ENCODE measurements at regions of chr1 and their contacts with region 1.

Region 1: GRCh38 chr1:151539990-151540981 is at the start of gene TUFT1:
- DNase-seq: peak; percentile 97
- H3K4me3 Mint-ChIP-seq: peak within 1 kb of the TSS; percentile 96
- H3K27ac Mint-ChIP-seq: peak within 1 kb of the TSS; percentile 98
- H3K4me1 Mint-ChIP-seq: peaks cover 62% of the 10 kb centered on the region
- H3K27me3 Mint-ChIP-seq: no peaks in the 10 kb centered on the region
- CTCF ChIP-seq: no peak
- total RNA-seq, gene TUFT1: 90.6 and 162 TPM in 2 replicates

Region 2: DNA sequence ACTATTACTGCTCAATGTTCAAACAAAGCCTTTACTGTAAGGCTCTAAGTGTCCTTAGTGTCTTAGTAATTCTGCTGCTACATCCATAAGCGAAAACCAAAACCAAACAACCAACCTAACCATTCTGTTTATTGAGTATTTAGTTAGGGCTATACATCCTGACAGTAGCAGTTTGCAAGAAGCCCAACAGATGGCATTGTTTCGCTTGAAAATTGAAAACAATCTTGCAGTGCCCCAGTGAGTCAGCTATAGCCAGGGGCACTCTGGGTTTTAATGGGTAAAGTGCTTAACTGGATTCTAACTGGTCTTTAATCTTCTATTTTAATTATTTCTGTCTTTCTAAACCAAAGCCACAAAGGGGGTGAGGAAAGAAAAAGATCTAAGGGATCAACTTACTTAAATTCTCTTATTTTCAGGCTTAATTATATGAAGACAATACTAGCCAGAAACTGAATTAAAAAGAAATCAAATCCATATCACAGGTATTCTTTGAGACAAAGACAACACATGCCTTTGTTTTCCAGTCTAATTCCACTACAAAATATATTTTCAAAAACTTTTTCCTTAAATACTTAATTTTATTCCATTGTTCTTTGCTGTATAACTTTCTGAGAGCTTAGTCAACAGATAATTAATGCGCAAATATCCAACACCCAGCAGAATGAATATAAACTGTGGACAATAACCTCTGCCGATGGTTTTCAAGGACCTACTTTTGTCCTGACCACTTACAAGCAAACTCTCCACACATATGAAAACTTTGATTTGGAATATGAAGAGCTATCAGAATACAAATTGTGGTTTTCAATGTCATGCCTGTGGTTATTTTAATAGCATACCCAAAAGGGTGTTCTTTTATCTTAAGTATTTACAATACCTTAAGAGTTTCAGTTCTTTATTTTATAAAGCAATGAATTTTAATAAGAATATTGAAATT is 96.2 kb before region 1 on chr1:
- CTCF ChIA-PET with region 1: interaction called, 6 read pairs
- POLR2A ChIA-PET with region 1: interaction called, 11 read pairs
- intact Hi-C with region 1: no loop called
- DNase-seq: peak; percentile 94
- H3K4me3 Mint-ChIP-seq: no peak overlapping the region
- H3K27ac Mint-ChIP-seq: no peak overlapping the region
- H3K4me1 Mint-ChIP-seq: peaks cover 24% of the 10 kb centered on the region
- H3K27me3 Mint-ChIP-seq: no peaks in the 10 kb centered on the region
- CTCF ChIP-seq: peak; percentile 93

Region 3: GRCh38 chr1:151510957-151511635 is 29.2 kb before region 1 on chr1 and contains the start of gene CGN:
- CTCF ChIA-PET with region 1: interaction called, 9 read pairs
- POLR2A ChIA-PET with region 1: interaction called, 20 read pairs
- intact Hi-C with region 1: loop called (anchors 2 kb)
- DNase-seq: peak; percentile 85
- H3K4me3 Mint-ChIP-seq: peak within 1 kb of the TSS; percentile 75
- H3K27ac Mint-ChIP-seq: no peak within 1 kb of the TSS
- H3K4me1 Mint-ChIP-seq: peaks cover 28% of the 10 kb centered on the region
- H3K27me3 Mint-ChIP-seq: peaks cover 17% of the 10 kb centered on the region
- CTCF ChIP-seq: no peak
- total RNA-seq, gene CGN: 0.32 and 0.33 TPM in 2 replicates

Region 4: GRCh38 chr1:151568626-151569088 is 28.4 kb after region 1 on chr1:
- CTCF ChIA-PET with region 1: interaction called, 4 read pairs
- POLR2A ChIA-PET with region 1: interaction called, 61 read pairs
- intact Hi-C with region 1: no loop called
- DNase-seq: peak; percentile 38
- H3K4me3 Mint-ChIP-seq: no peak overlapping the region
- H3K27ac Mint-ChIP-seq: peak overlapping the region; percentile 24
- H3K4me1 Mint-ChIP-seq: peaks cover 23% of the 10 kb centered on the region
- H3K27me3 Mint-ChIP-seq: no peaks in the 10 kb centered on the region
- CTCF ChIP-seq: no peak

Region 5: DNA sequence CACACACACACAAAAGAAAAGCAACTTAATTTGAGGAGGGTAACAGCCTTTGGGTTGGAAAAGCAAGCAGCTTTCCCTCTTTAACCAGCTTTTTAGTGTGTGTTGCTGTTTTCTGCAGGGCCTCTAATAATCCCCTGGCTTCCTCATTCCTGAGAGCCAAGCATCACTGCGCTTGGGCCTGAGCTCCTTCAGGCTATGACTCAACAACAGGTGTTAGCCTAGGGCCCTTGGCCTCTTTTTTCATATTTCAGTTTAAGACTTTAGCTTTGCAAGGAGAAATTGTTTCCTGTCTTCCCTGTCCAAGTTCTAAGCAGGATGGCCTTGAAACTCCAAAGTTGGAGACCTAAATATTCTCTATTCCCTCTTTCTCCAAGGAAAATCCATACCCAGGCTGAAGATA is 45.3 kb after region 1 on chr1:
- CTCF ChIA-PET with region 1: interaction called, 5 read pairs
- POLR2A ChIA-PET with region 1: interaction called, 23 read pairs
- intact Hi-C with region 1: no loop called
- DNase-seq: peak; percentile 68
- H3K4me3 Mint-ChIP-seq: no peak overlapping the region
- H3K27ac Mint-ChIP-seq: peak overlapping the region; percentile 8
- H3K4me1 Mint-ChIP-seq: peaks cover 27% of the 10 kb centered on the region
- H3K27me3 Mint-ChIP-seq: no peaks in the 10 kb centered on the region
- CTCF ChIP-seq: no peak

Region 6: DNA sequence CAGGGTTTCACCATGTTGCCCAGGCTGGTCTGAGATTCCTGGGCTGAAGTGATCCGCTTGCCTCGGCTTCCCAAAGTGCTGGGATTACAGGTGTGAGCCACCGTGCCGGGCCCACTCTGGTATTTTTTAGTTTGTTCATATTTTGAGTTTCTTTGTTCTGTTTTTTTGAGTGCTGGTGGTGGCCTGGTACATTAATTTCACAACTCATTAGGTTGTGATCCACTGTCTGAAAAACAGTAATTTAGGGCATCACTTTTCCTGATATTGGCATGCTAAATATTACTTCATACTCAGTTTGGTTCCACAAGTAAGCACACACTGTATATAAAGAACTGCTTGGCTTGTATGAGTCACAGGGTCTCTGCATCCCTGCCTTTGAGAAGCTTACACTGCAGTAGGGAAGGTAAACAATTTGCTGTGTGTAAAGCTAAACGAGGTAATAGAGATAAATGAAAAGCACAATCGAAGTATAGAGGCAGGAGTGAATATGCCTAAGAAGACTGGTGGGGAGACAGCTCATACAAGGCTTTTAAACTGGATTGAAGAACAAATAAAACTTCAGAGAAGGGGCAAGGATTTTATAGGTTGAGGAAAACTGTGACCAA is 79.3 kb after region 1 on chr1:
- CTCF ChIA-PET with region 1: interaction called, 6 read pairs
- POLR2A ChIA-PET with region 1: interaction called, 13 read pairs
- intact Hi-C with region 1: no loop called
- DNase-seq: peak; percentile 58
- H3K4me3 Mint-ChIP-seq: no peak overlapping the region
- H3K27ac Mint-ChIP-seq: peak overlapping the region; percentile 17
- H3K4me1 Mint-ChIP-seq: peaks cover 37% of the 10 kb centered on the region
- H3K27me3 Mint-ChIP-seq: no peaks in the 10 kb centered on the region
- CTCF ChIP-seq: no peak

Region 7: GRCh38 chr1:152167835-152168519 is 627.7 kb after region 1 on chr1:
- CTCF ChIA-PET with region 1: no interaction called
- POLR2A ChIA-PET with region 1: no interaction called
- intact Hi-C with region 1: no loop called
- DNase-seq: peak; percentile 100
- H3K4me3 Mint-ChIP-seq: peak overlapping the region; percentile 49
- H3K27ac Mint-ChIP-seq: peak overlapping the region; percentile 99
- H3K4me1 Mint-ChIP-seq: peaks cover 70% of the 10 kb centered on the region
- H3K27me3 Mint-ChIP-seq: no peaks in the 10 kb centered on the region
- CTCF ChIP-seq: no peak

Measured in MCF 10A (cell line).